Vagina (tissue), 2 donors: ENCODE measurements at regions of chr2 and their contacts with region 1.

Region 1: DNA sequence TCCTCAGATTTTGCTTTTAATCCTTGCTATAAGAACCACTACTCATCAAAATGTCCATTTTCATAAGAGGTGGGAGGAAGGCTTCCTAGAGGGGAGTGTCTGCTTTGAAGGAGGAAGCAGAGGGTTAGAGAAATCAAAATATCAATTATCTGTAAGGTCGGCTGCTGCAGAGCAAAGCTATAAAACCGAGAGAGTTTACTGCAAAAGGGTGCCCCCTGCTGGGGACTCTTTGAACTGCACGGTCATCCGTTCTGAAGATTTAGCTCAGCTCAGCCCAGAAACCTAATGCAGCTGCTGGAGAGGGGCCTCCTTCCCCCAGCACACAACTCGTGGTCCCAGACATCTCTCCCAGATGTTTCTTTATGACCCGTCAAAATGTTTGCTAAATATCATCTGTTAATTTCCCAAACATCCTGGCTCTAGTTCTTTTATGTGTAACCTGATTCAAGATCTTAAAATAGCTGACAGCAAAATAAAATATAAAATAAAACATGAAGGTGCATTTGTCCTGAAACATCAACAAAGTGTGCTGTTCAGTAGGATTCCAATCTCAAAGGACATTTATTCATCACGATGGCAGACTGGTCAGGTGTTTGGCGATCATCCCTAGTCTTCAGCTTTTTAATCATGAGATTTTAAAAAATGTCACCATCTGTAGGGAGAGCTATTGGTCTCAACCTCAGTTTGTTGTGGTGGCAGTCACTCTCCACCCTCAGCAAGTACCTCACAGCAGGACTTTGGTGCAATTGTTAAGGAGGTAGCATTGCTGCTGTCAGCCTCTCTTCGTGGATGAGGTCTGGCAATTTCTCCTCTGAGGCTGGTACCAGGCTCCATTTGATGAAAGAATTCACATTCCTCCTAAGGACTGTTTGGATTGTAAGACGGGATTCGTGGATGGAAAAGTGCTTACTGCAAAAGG is 185.9 kb downstream of the MTX2 start:
- DNase-seq: no peak
- H3K4me3 ChIP-seq: no peak overlapping the region
- H3K27ac ChIP-seq: peak overlapping the region; percentile 19
- H3K4me1 ChIP-seq: peaks cover 9% of the 10 kb centered on the region
- H3K27me3 ChIP-seq: no peaks in the 10 kb centered on the region
- CTCF ChIP-seq: peak; percentile 65 to 81 (median 76)
- POLR2A ChIP-seq: no peak

Region 2: GRCh38 chr2:176140513-176141317 is 314.4 kb before region 1 on chr2:
- intact Hi-C with region 1: loop called (anchors 5 kb)
- DNase-seq: no peak
- H3K4me3 ChIP-seq: peak overlapping the region; percentile 42 to 44
- H3K27ac ChIP-seq: peak overlapping the region; percentile 57
- H3K4me1 ChIP-seq: peaks cover 18% of the 10 kb centered on the region
- H3K27me3 ChIP-seq: no peaks in the 10 kb centered on the region
- CTCF ChIP-seq: peak; percentile 76 to 94 (median 89)
- POLR2A ChIP-seq: no peak

Region 3: GRCh38 chr2:176385838-176386237 is 69.3 kb before region 1 on chr2:
- intact Hi-C with region 1: no loop called
- DNase-seq: no peak
- H3K4me3 ChIP-seq: no peak overlapping the region
- H3K27ac ChIP-seq: no peak overlapping the region
- H3K4me1 ChIP-seq: no peaks in the 10 kb centered on the region
- H3K27me3 ChIP-seq: no peaks in the 10 kb centered on the region
- CTCF ChIP-seq: no peak
- POLR2A ChIP-seq: no peak

Region 4: DNA sequence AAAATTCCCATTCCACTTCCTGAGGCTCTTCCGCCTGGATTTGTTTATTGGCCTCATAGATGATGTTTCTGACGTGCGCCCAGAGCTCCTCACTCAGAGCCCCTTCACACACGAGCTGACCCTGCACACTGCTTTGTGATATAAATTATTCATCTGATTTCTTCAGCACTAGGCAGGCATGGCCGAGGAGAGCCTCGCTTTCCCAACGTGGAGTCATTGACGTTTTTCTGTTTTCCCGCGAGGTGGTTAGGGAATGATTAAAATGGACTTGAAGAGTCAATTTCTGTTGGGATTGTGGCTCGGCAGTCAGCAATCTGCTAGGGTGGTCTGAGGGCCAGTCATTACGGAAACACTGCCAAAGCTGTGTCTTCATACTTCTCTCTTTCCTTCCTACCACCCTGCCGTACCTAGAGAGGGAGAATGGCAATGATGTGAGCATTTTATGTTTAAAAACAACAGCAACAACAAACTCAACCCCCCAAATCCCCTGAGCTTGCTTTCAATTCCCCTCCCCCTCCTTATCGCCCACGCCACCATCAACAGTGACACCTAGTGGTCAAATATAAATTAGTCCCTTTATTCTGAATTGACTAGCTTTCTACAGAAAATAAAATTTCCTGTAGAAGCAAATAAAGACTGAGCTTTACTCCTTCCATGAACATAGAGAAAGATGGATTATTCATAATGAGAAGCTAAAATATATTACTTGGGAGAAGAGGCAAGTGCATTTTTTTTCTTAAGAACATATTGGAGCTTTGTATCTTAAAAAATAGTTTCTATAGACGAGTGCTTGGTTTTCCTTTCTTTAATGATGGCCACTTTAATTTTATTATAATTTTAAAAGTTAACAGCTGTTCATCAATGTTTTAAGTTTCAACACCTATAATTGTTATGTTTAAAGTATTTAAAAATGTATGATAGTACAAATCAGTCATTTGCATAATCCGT is 99.2 kb after region 1 on chr2:
- intact Hi-C with region 1: loop called (anchors 5 kb)
- DNase-seq: no peak
- H3K4me3 ChIP-seq: peak overlapping the region; percentile 34 to 48
- H3K27ac ChIP-seq: peak overlapping the region; percentile 42
- H3K4me1 ChIP-seq: peaks cover 11% of the 10 kb centered on the region
- H3K27me3 ChIP-seq: no peaks in the 10 kb centered on the region
- CTCF ChIP-seq: peak; percentile 73 to 77 (median 74)
- POLR2A ChIP-seq: no peak

Region 5: GRCh38 chr2:176638167-176639015 is 183.2 kb after region 1 on chr2:
- intact Hi-C with region 1: loop called (anchors 10 kb)
- DNase-seq: no peak
- H3K4me3 ChIP-seq: peak overlapping the region; percentile 58 to 84
- H3K27ac ChIP-seq: no peak overlapping the region
- H3K4me1 ChIP-seq: peaks cover 9% of the 10 kb centered on the region
- H3K27me3 ChIP-seq: no peaks in the 10 kb centered on the region
- CTCF ChIP-seq: peak; percentile 65 to 77 (median 67)
- POLR2A ChIP-seq: no peak